Colonic mucosa (tissue), 4 donors: ENCODE measurements at regions of chr3 and their contacts with region 1.

Region 1: GRCh38 chr3:3126477-3127431 is at the start of gene TRNT1:
- DNase-seq: peak; percentile 96
- H3K4me3 ChIP-seq: peak within 1 kb of the TSS; percentile 100
- H3K27ac ChIP-seq: peak within 1 kb of the TSS; percentile 92
- H3K4me1 ChIP-seq: peaks cover 5% of the 10 kb centered on the region
- H3K27me3 ChIP-seq: no peaks in the 10 kb centered on the region
- CTCF ChIP-seq: no peak
- total RNA-seq, gene TRNT1: 15.7 to 26.8 TPM

Region 2: GRCh38 chr3:3179407-3180094 is 52.8 kb after region 1 on chr3 and contains the start of gene CRBN:
- intact Hi-C with region 1: loop called (anchors 5 kb)
- DNase-seq: peak; percentile 95
- H3K4me3 ChIP-seq: peak within 1 kb of the TSS; percentile 96
- H3K27ac ChIP-seq: peak within 1 kb of the TSS; percentile 50
- H3K4me1 ChIP-seq: peaks cover 6% of the 10 kb centered on the region
- H3K27me3 ChIP-seq: no peaks in the 10 kb centered on the region
- CTCF ChIP-seq: peak; percentile 99
- total RNA-seq, gene CRBN: 30.0 to 47.7 TPM